ENCODE measurements at regions of chr18 and their contacts with region 1.

Region 1: GRCh38 chr18:8988261-8988871 is 114.1 kb upstream of the NDUFV2 start:
- DNase-seq: peak; percentile 72
- ATAC-seq: peak; percentile 87
- H3K4me3 Mint-ChIP-seq: no peak overlapping the region
- H3K27ac Mint-ChIP-seq: no peak overlapping the region
- H3K4me1 Mint-ChIP-seq: no peaks in the 10 kb centered on the region
- H3K27me3 Mint-ChIP-seq: peaks cover 13% of the 10 kb centered on the region

Region 2: DNA sequence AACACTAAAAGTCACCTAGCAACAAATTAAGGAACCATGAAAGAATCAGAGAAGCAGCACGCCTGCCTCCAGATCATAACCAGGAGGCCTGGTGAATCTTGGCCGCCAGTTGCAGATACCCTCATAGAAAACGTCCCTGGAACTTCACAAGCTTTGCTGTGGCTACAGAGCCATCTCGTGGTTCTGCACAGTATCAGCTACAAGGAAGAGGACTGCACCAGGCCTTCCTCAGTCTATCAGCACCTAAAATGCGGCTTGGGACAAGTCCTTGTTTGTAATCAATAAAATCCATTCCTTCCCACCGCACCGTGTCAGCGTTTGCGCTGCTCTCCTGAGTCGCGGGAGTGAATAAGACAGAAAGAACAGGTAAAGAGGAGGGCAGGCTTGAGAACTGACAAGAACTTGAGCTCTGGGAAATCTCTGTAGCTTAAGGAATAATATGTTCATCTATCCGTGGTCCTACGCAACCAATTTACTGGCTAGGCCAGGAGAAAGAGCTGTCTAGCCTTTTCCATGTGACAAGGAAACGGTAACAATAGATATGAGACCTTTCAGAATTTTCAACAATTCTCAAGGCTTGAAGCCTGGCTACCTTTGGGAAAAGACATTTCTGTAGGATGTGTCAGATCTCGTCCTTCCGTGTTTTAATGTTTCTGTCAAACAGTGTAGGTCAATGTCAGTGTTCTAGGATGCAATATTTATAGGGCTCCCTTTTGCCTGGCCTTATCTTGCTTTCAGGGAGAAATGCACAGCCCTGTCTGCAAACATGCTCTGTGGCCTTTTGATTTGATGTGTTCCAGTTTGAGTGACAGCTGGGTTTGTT is 507.6 kb before region 1 on chr18:
- CTCF ChIA-PET with region 1: interaction called, 4 read pairs
- POLR2A ChIA-PET with region 1: no interaction called
- intact Hi-C with region 1: loop called in 1 of 2 experiments (anchors 10 kb)
- DNase-seq: no peak
- ATAC-seq: no peak
- H3K4me3 Mint-ChIP-seq: no peak overlapping the region
- H3K27ac Mint-ChIP-seq: no peak overlapping the region
- H3K4me1 Mint-ChIP-seq: no peaks in the 10 kb centered on the region
- H3K27me3 Mint-ChIP-seq: peaks cover 15% of the 10 kb centered on the region

Region 3: GRCh38 chr18:8998481-8999217 is 10.3 kb after region 1 on chr18:
- CTCF ChIA-PET with region 1: interaction called, 13 read pairs
- POLR2A ChIA-PET with region 1: no interaction called
- intact Hi-C with region 1: no loop called
- DNase-seq: no peak
- ATAC-seq: no peak
- H3K4me3 Mint-ChIP-seq: no peak overlapping the region
- H3K27ac Mint-ChIP-seq: no peak overlapping the region
- H3K4me1 Mint-ChIP-seq: no peaks in the 10 kb centered on the region
- H3K27me3 Mint-ChIP-seq: peaks cover 24% of the 10 kb centered on the region